ENCODE measurements at regions of chr11 and their contacts with region 1.

Region 1: DNA sequence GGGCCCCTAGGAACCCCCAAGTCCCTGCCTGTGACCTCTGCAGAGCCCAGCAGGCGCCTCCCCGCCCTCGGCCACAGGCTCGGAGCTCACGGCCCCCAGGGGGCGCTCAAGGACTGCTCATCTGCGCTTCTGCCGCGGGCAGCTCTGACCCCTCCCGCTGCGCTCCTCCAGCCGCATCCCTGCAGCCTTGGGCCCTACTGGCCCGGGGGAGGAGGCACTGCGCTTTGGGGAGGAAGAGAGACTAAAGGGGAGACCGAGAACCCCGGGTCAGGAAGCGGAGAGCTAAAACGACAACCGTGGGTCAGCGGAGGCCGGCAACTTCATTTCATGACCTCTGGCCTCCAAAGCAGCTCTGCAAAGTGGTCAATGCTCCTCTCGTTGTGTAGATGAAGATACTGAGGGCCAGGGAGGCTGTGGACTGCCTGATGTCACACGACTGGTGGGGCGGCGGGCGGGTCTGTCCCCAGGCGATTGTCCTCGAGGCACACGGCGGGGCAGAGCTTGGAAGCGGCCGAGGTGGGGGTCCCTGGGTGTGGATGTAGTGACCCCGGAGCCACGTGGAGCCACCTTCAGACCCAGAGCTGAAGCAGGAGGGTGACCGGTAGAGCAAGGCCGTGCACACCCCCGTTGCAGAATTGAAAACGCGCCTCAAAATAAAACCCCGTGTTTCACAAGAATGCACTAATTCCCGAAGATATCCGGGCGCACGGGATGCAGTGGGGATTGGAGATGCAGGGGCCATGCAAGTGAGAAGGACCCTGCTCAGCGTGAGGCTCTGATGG is 2.7 kb upstream of the KRTAP5-6 start:
- DNase-seq: peak; percentile 54 to 87 (median 78)
- ATAC-seq: peak; percentile 82 to 93
- H3K4me3 Mint-ChIP-seq: peak overlapping the region in 6 of 10 donors; percentile 15 to 52 (median 42)
- H3K27ac Mint-ChIP-seq: no peak overlapping the region
- H3K4me1 Mint-ChIP-seq: peaks cover 5 to 19% (median 14%) of the 10 kb centered on the region in 4 donors
- H3K27me3 Mint-ChIP-seq: peaks cover 2 to 38% (median 16%) of the 10 kb centered on the region in 5 donors

Region 2: GRCh38 chr11:1832211-1832919 is 138.1 kb after region 1 on chr11:
- POLR2A ChIA-PET with region 1: interaction called, 54 read pairs
- DNase-seq: peak; percentile 46 to 83 (median 71)
- ATAC-seq: peak; percentile 81 to 95
- H3K4me3 Mint-ChIP-seq: peak overlapping the region in 2 of 10 donors; percentile 31 to 36
- H3K27ac Mint-ChIP-seq: peak overlapping the region in 1 of 10 donors; percentile 96
- H3K4me1 Mint-ChIP-seq: peaks cover 0 to 6% (median 2%) of the 10 kb centered on the region in 4 donors
- H3K27me3 Mint-ChIP-seq: peaks cover 2 to 15% (median 5%) of the 10 kb centered on the region in 5 donors

Measured in naive thymus-derived CD8-positive, alpha-beta T cell (primary cell).